ENCODE measurements at regions of chr1 and their contacts with region 1.

Region 1: DNA sequence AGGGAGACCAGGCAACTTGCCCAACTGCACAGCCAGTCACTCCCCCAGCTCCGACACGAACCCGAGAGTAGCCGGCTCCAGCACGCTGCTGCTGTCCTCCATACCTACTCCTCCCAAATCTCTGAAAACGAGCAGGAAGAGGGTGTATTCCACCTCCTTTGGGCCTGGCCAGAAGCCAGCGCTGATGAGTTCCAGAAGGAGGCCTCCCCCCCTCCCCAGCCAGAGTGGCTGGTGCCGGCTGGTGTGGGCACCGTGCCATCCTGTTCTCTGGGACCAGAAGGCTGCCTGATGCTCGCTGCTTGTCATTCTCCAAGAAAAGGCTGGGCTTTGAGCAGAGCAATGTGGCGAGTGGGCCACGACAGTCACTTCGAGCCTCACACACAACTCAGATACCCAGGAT is 22.2 kb downstream of the KCNN3 start:
- DNase-seq: no peak
- H3K4me3 Mint-ChIP-seq: no peak overlapping the region
- H3K27ac Mint-ChIP-seq: no peak overlapping the region
- H3K4me1 Mint-ChIP-seq: peaks cover 16% of the 10 kb centered on the region
- H3K27me3 Mint-ChIP-seq: peaks cover 10% of the 10 kb centered on the region

Region 2: GRCh38 chr1:154784924-154785531 is 62.9 kb before region 1 on chr1:
- CTCF ChIA-PET with region 1: interaction called, 3 read pairs
- POLR2A ChIA-PET with region 1: no interaction called
- intact Hi-C with region 1: loop called (anchors 1 kb)
- DNase-seq: peak; percentile 78
- H3K4me3 Mint-ChIP-seq: peak overlapping the region; percentile 49
- H3K27ac Mint-ChIP-seq: peak overlapping the region; percentile 86
- H3K4me1 Mint-ChIP-seq: peaks cover 31% of the 10 kb centered on the region
- H3K27me3 Mint-ChIP-seq: no peaks in the 10 kb centered on the region

Region 3: GRCh38 chr1:154809436-154810413 is 38.2 kb before region 1 on chr1:
- CTCF ChIA-PET with region 1: no interaction called
- POLR2A ChIA-PET with region 1: no interaction called
- intact Hi-C with region 1: no loop called
- DNase-seq: peak; percentile 18
- H3K4me3 Mint-ChIP-seq: no peak overlapping the region
- H3K27ac Mint-ChIP-seq: no peak overlapping the region
- H3K4me1 Mint-ChIP-seq: peaks cover 12% of the 10 kb centered on the region
- H3K27me3 Mint-ChIP-seq: peaks cover 7% of the 10 kb centered on the region